A673 (cell line): ENCODE measurements at regions of chr1 and their contacts with region 1.

Region 1: GRCh38 chr1:54944610-54945544 is 35.6 kb upstream of the TMEM61 start:
- DNase-seq: peak; percentile 85
- H3K4me3 ChIP-seq: peak overlapping the region; percentile 3
- H3K27ac ChIP-seq: no peak overlapping the region
- H3K4me1 ChIP-seq: peaks cover 10% of the 10 kb centered on the region
- H3K27me3 ChIP-seq: no peaks in the 10 kb centered on the region
- CTCF ChIP-seq: peak; percentile 91

Region 2: GRCh38 chr1:54212872-54213271 is 732.0 kb before region 1 on chr1:
- CTCF ChIA-PET with region 1: no interaction called
- POLR2A ChIA-PET with region 1: no interaction called
- intact Hi-C with region 1: no loop called
- DNase-seq: no peak
- H3K4me3 ChIP-seq: no peak overlapping the region
- H3K27ac ChIP-seq: no peak overlapping the region
- H3K4me1 ChIP-seq: no peaks in the 10 kb centered on the region
- H3K27me3 ChIP-seq: no peaks in the 10 kb centered on the region
- CTCF ChIP-seq: no peak

Region 3: GRCh38 chr1:54996359-54996868 is 51.5 kb after region 1 on chr1:
- CTCF ChIA-PET with region 1: interaction called, 28 read pairs
- POLR2A ChIA-PET with region 1: no interaction called
- intact Hi-C with region 1: loop called (anchors 1 kb)
- DNase-seq: peak; percentile 88
- H3K4me3 ChIP-seq: no peak overlapping the region
- H3K27ac ChIP-seq: no peak overlapping the region
- H3K4me1 ChIP-seq: peaks cover 8% of the 10 kb centered on the region
- H3K27me3 ChIP-seq: peaks cover 14% of the 10 kb centered on the region
- CTCF ChIP-seq: peak; percentile 92

Region 4: GRCh38 chr1:55021965-55022546 is 77.2 kb after region 1 on chr1:
- CTCF ChIA-PET with region 1: interaction called, 78 read pairs
- POLR2A ChIA-PET with region 1: no interaction called
- intact Hi-C with region 1: loop called (anchors 1 kb)
- DNase-seq: peak; percentile 84
- H3K4me3 ChIP-seq: no peak overlapping the region
- H3K27ac ChIP-seq: no peak overlapping the region
- H3K4me1 ChIP-seq: no peaks in the 10 kb centered on the region
- H3K27me3 ChIP-seq: no peaks in the 10 kb centered on the region
- CTCF ChIP-seq: peak; percentile 97